Common myeloid progenitor, CD34-positive (primary cell): ENCODE measurements at regions of chr4 and their contacts with region 1.

Region 1: DNA sequence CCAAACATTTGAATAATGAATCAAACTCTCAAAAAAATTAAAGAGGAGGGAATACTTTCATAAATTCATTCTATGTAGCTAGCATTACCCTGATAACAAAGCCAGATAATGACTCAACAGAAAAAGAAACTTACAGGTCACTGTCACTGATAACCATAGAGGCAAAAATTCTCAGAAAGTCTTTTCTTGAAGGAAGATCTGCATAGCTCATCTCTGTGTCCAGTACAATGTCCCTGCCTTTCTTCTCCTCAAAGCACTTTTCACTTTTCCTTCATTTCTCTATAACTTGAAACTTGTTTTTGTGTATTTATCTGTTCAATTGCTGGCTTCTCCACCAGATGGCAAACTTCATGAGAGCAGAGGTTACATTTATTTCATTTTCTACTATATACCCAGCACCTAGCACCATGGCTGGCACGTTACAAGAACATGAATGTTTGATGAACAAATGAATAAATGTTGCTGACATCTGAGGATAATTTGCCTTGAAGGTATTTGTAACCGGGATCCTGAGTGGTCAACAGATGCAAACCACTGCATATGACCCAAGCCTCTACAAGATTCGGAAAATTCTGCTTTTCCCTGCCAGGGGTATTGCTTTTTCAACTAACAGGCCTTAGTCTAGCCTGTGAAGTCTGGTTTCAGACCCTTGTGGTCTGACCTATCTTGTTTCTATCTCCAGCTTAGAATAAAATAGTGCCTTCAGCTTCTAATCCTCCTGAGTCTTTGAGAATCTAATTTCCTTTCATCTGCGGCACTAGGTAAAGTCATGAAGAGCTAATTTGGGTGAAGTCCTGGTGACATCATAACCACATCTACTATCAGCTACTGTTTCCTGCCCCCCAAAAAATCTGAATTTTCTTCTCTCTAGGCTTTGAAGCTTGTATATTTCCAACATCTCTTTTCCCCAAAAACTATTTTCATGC is 52.5 kb upstream of the ANTXR2 start:
- DNase-seq: peak; percentile 64 to 83 (median 82)
- H3K4me3 ChIP-seq: peak overlapping the region in 1 of 7 experiments; percentile 29
- H3K27ac ChIP-seq: peak overlapping the region; percentile 81 to 92
- H3K4me1 ChIP-seq: peaks cover 6 to 36% (median 28%) of the 10 kb centered on the region in 4 experiments
- H3K27me3 ChIP-seq: no peaks in the 10 kb centered on the region

Region 2: GRCh38 chr4:79882806-79883205 is 242.7 kb before region 1 on chr4:
- CTCF ChIA-PET with region 1: no interaction called
- POLR2A ChIA-PET with region 1: no interaction called
- DNase-seq: peak in 2 of 3 donors; percentile 18 to 33
- H3K4me3 ChIP-seq: no peak overlapping the region
- H3K27ac ChIP-seq: no peak overlapping the region
- H3K4me1 ChIP-seq: no peaks in the 10 kb centered on the region
- H3K27me3 ChIP-seq: no peaks in the 10 kb centered on the region

Region 3: GRCh38 chr4:79949178-79949577 is 176.3 kb before region 1 on chr4:
- CTCF ChIA-PET with region 1: no interaction called
- POLR2A ChIA-PET with region 1: no interaction called
- DNase-seq: no peak
- H3K4me3 ChIP-seq: no peak overlapping the region
- H3K27ac ChIP-seq: no peak overlapping the region
- H3K4me1 ChIP-seq: no peaks in the 10 kb centered on the region
- H3K27me3 ChIP-seq: no peaks in the 10 kb centered on the region

Region 4: GRCh38 chr4:80072744-80073472 is 52.6 kb before region 1 on chr4 and contains the start of gene ANTXR2:
- CTCF ChIA-PET with region 1: interaction called, 25 read pairs
- POLR2A ChIA-PET with region 1: interaction called, 3 read pairs
- DNase-seq: peak; percentile 90 to 98 (median 96)
- H3K4me3 ChIP-seq: peak within 1 kb of the TSS; percentile 87 to 98 (median 95)
- H3K27ac ChIP-seq: peak within 1 kb of the TSS; percentile 92 to 95
- H3K4me1 ChIP-seq: peaks cover 42 to 75% (median 53%) of the 10 kb centered on the region in 4 experiments
- H3K27me3 ChIP-seq: no peaks in the 10 kb centered on the region

Region 5: GRCh38 chr4:80138551-80139538 is 13.3 kb after region 1 on chr4:
- CTCF ChIA-PET with region 1: interaction called, 14 read pairs
- POLR2A ChIA-PET with region 1: interaction called, 11 read pairs
- DNase-seq: peak; percentile 66 to 98 (median 96)
- H3K4me3 ChIP-seq: peak overlapping the region in 2 of 7 experiments; percentile 25 to 38
- H3K27ac ChIP-seq: peak overlapping the region; percentile 75 to 83
- H3K4me1 ChIP-seq: peaks cover 36 to 57% (median 47%) of the 10 kb centered on the region in 4 experiments
- H3K27me3 ChIP-seq: no peaks in the 10 kb centered on the region

Region 6: DNA sequence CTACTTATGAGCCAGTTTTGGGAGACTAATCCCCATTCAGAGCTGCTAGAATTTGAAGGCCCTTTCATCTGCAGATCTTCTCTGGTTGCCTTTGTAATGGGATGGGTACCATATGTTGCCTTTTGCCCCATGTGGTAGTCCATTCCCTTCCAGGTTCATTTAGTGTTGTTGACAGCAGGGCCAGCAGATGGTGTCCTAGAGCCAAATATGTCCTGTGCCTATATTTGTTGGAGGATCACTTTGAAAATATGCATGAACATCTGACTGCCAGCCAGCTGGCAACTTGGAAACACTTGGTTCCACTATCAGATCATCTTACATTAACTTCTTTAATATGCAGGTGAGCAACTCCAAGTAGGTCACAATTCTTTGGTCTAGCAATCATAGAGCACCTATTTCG is 240.4 kb after region 1 on chr4:
- CTCF ChIA-PET with region 1: no interaction called
- POLR2A ChIA-PET with region 1: no interaction called
- DNase-seq: peak; percentile 50 to 79 (median 70)
- H3K4me3 ChIP-seq: no peak overlapping the region
- H3K27ac ChIP-seq: no peak overlapping the region
- H3K4me1 ChIP-seq: no peaks in the 10 kb centered on the region
- H3K27me3 ChIP-seq: peaks cover 0 to 7% (median 1%) of the 10 kb centered on the region in 5 experiments